ENCODE measurements at regions of chr19 and their contacts with region 1.

Region 1: GRCh38 chr19:531009-531752 is 379 bp upstream of the CDC34 start:
- DNase-seq: peak; percentile 54
- ATAC-seq: peak; percentile 79
- H3K4me3 ChIP-seq: peak overlapping the region; percentile 74 to 86
- H3K27ac ChIP-seq: peak overlapping the region; percentile 96
- H3K4me1 ChIP-seq: peaks cover 23 to 45% of the 10 kb centered on the region in 2 experiments
- H3K27me3 ChIP-seq: no peaks in the 10 kb centered on the region
- CTCF ChIP-seq: no peak
- POLR2A ChIP-seq: peak; percentile 14
- RAD21 ChIP-seq: no peak

Region 2: DNA sequence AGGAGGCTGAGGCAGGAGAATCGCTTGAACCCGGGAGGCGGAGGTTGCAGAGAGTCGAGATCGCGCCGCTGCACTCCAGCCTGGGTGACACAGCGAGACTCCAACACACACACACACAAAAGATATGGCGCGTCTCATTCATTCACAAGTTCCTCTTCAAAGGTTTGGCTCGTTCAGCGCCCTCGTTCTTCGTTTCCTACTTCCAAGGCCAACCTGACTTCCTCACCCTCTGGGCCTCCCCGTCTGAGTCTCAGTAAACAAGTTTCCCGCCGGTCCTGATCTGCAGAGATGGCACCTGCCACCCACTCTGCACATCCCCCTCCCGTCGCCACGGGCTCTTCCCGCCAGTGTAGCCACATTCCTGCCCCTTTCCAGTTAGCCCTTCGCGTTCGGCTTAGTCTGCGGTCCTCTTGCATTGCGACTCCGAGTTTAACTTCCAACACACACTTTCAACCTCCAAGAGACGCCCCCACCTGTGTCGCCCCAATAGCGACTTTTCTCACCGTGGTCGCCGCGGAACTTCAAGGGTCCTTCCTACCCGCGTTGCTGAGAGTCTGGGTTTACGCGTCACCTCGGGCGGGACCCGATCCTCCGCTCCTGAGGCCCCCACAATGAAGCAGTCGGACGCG is 39.9 kb after region 1 on chr19:
- CTCF ChIA-PET with region 1: interaction called, 3 read pairs
- POLR2A ChIA-PET with region 1: interaction called, 9 read pairs
- RAD21 ChIA-PET with region 1: no interaction called
- intact Hi-C with region 1: loop called (anchors 1 kb)
- DNase-seq: no peak
- ATAC-seq: peak; percentile 45
- H3K4me3 ChIP-seq: peak overlapping the region; percentile 71 to 96
- H3K27ac ChIP-seq: peak overlapping the region; percentile 97
- H3K4me1 ChIP-seq: peaks cover 3 to 34% of the 10 kb centered on the region in 2 experiments; a peak in 3 of 4 replicates
- H3K27me3 ChIP-seq: no peaks in the 10 kb centered on the region
- CTCF ChIP-seq: no peak
- POLR2A ChIP-seq: no peak
- RAD21 ChIP-seq: no peak

Region 3: GRCh38 chr19:615619-616018 is 84.4 kb after region 1 on chr19:
- CTCF ChIA-PET with region 1: no interaction called
- POLR2A ChIA-PET with region 1: no interaction called
- RAD21 ChIA-PET with region 1: no interaction called
- intact Hi-C with region 1: no loop called
- DNase-seq: no peak
- ATAC-seq: no peak; the same call in 1 of the 2 replicates
- H3K4me3 ChIP-seq: no peak overlapping the region
- H3K27ac ChIP-seq: no peak overlapping the region
- H3K4me1 ChIP-seq: no peaks in the 10 kb centered on the region
- H3K27me3 ChIP-seq: no peaks in the 10 kb centered on the region
- CTCF ChIP-seq: no peak
- POLR2A ChIP-seq: no peak
- RAD21 ChIP-seq: no peak